Thyroid gland (tissue), 4 donors: ENCODE measurements at regions of chr7 and their contacts with region 1.

Region 1: GRCh38 chr7:75866489-75867389 is 12.1 kb upstream of the RHBDD2 start:
- DNase-seq: peak; percentile 58 to 59
- H3K4me3 ChIP-seq: no peak overlapping the region
- H3K27ac ChIP-seq: no peak overlapping the region
- H3K4me1 ChIP-seq: peaks cover 0 to 3% of the 10 kb centered on the region in 2 donors
- H3K27me3 ChIP-seq: no peaks in the 10 kb centered on the region
- CTCF ChIP-seq: peak; percentile 69 to 97 (median 94)
- POLR2A ChIP-seq: no peak

Region 2: GRCh38 chr7:75814407-75814947 is 52.3 kb before region 1 on chr7:
- intact Hi-C with region 1: no loop called
- DNase-seq: no peak
- H3K4me3 ChIP-seq: no peak overlapping the region
- H3K27ac ChIP-seq: no peak overlapping the region
- H3K4me1 ChIP-seq: no peaks in the 10 kb centered on the region
- H3K27me3 ChIP-seq: no peaks in the 10 kb centered on the region
- CTCF ChIP-seq: no peak
- POLR2A ChIP-seq: no peak

Region 3: DNA sequence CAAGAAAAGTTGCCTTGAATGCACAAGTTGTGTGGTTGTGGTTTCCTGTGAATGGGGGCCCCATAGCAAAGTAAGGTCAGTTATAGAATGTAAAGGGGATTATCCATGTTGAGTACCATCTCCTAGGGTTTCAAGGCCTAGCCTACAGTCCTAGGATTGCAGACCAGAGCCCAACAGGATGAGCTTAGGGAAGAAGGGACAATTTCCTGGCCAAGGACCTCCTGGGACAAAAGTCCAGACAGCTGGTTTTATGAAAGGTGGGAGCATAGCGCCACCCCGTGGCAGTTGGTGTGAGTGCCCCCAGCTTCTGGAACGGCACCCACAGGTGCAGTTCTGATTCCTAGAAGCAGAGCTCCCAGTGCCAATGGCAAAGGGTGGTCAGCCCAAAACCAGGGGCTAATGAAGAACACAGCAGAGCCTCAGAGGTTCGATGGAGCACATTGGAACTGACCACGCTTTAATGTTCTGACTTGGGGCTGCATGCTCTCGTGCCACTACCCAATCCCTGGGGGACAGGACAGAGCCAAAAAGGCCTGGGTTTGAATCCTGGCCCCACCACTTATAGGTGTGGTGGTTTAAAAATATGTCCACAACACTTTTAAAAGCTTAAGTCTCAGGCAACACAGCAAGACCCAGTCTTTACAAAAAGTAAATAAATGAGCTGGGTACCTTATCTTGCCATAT is 153.4 kb after region 1 on chr7:
- intact Hi-C with region 1: loop called (anchors 2 kb)
- DNase-seq: peak; percentile 77 to 83
- H3K4me3 ChIP-seq: no peak overlapping the region
- H3K27ac ChIP-seq: no peak overlapping the region
- H3K4me1 ChIP-seq: no peaks in the 10 kb centered on the region
- H3K27me3 ChIP-seq: no peaks in the 10 kb centered on the region
- CTCF ChIP-seq: peak; percentile 81 to 91 (median 84)
- POLR2A ChIP-seq: no peak

Region 4: DNA sequence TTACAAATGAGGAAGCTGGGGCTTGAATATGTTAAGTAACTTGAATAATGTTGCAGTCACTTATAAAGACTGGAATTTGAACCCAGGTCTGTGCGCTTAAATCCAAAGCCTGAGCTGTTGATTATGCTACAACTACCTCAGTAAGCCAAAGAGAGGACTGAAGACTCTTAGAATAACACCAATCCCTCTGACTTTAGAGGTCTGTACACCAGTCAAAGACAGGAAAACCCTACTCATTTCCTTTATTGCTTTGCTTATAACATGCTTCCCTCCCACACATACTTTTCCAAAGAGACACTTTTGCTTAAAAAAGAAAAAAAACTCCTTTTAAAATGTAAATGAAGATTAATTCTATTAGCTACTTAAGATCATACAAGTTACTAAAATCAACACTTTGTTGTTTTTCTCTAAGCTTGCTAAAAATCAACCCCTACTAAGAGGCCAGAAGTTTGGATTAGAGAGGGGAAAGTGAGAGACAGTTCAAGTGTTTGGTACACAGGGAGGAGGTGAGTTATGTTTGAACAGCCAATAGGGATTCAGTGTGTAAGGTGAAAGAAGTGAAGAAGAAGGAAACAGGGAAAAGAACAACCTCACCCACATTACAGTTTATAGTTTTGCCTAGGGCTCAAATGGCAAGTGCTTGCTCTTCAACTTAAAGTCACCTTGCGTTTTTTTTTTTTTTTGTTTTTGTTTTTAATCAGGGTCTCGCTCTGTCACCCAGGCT is 255.9 kb after region 1 on chr7:
- intact Hi-C with region 1: loop called (anchors 10 kb)
- DNase-seq: no peak
- H3K4me3 ChIP-seq: no peak overlapping the region
- H3K27ac ChIP-seq: no peak overlapping the region
- H3K4me1 ChIP-seq: no peaks in the 10 kb centered on the region
- H3K27me3 ChIP-seq: no peaks in the 10 kb centered on the region
- CTCF ChIP-seq: no peak
- POLR2A ChIP-seq: no peak